PC-9 (cell line): ENCODE measurements at regions of chr1 and their contacts with region 1.

Region 1: DNA sequence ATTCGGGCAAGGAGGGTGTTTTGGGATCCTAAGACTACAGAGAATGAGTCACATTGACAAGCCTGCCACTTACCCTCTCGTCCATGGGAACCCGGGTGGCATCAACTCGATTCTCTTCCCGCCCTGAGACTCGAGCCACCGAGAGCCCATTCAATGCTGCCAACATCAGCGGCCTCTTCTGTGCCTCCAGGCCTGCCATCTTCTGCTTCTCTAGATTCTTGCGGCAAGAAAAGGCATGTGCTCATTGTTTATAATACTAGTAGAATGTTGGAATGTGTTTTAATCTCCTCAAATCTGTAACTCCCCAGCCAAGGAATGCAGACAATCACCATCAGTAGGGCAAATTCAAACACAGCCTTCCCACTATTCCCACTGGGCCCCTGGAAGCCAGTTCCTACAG is 96.9 kb downstream of the SMYD2 start:
- DNase-seq: peak in 1 of 2 experiments; percentile 83
- H3K4me3 ChIP-seq: no peak overlapping the region
- H3K27ac ChIP-seq: no peak overlapping the region
- H3K4me1 ChIP-seq: peaks cover 26% of the 10 kb centered on the region
- H3K27me3 ChIP-seq: no peaks in the 10 kb centered on the region
- CTCF ChIP-seq: no peak

Region 2: DNA sequence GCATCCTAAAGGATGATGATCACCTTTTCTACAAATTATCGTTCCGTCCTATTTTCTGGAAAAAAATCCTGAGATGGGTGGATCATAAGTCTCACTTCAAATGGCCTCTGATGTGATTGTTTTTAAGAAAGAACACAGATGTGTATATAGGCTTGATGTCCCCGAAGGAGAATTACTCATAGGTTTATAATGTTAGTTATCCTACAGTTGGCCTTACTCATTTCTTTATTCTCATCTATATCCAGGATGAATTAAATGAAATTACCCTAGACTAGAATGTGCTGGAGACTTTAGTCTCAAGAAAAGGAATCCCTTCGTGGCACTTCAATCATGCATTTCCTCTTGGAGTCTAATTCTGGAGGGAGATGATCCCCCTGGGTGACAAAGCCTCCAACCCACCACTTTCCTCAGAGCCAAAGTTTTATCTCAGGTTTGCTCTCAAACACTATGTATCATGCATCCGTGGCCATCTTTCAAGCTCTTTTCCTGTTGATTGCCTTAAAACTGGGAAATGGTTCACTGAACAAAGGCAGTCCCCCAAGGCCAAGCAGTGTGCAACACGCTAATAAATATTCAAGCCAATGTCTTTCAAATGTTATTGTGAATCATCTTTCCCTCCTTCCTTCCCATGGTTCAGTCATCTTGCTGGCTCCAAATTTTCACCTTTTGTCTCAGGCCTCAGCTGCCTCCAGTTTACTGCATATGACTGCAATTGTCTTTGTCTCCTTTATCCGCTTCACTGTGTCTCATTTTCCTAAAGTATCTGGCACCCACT is 129.4 kb before region 1 on chr1:
- CTCF ChIA-PET with region 1: no interaction called
- POLR2A ChIA-PET with region 1: no interaction called
- intact Hi-C with region 1: no loop called
- DNase-seq: no peak
- H3K4me3 ChIP-seq: no peak overlapping the region
- H3K27ac ChIP-seq: no peak overlapping the region
- H3K4me1 ChIP-seq: no peaks in the 10 kb centered on the region
- H3K27me3 ChIP-seq: no peaks in the 10 kb centered on the region
- CTCF ChIP-seq: no peak

Region 3: GRCh38 chr1:214331827-214332423 is 46.0 kb before region 1 on chr1:
- CTCF ChIA-PET with region 1: no interaction called
- POLR2A ChIA-PET with region 1: no interaction called
- intact Hi-C with region 1: no loop called
- DNase-seq: peak in 1 of 2 experiments; percentile 38
- H3K4me3 ChIP-seq: no peak overlapping the region
- H3K27ac ChIP-seq: no peak overlapping the region
- H3K4me1 ChIP-seq: peaks cover 8% of the 10 kb centered on the region; the same call in 1 of the 2 replicates
- H3K27me3 ChIP-seq: no peaks in the 10 kb centered on the region
- CTCF ChIP-seq: peak; percentile 88

Region 4: GRCh38 chr1:214349781-214350180 is 28.1 kb before region 1 on chr1:
- CTCF ChIA-PET with region 1: no interaction called
- POLR2A ChIA-PET with region 1: interaction called, 4 read pairs
- intact Hi-C with region 1: loop called (anchors 2 kb)
- DNase-seq: peak in 1 of 2 experiments; percentile 59
- H3K4me3 ChIP-seq: no peak overlapping the region
- H3K27ac ChIP-seq: no peak overlapping the region
- H3K4me1 ChIP-seq: no peaks in the 10 kb centered on the region
- H3K27me3 ChIP-seq: no peaks in the 10 kb centered on the region
- CTCF ChIP-seq: no peak

Region 5: DNA sequence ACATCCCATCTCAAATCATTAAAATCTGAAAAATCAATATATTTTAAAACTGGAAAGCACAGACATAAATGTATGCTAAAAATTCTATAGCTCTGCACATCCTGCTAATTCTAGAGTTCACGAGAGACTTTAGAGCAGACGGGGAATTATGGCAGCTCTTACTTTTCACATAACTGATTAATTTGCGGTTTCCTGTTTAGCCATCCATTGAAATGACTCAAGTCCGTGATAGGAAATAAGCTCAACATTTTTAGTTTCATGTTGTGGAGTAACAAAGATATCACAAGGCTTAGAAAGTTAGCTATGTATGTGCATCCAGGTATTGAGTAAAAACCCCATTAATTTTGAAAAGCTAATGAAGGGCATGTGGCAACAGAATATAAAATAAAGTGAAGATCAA is 26.3 kb after region 1 on chr1:
- CTCF ChIA-PET with region 1: no interaction called
- POLR2A ChIA-PET with region 1: no interaction called
- intact Hi-C with region 1: no loop called
- DNase-seq: no peak
- H3K4me3 ChIP-seq: no peak overlapping the region
- H3K27ac ChIP-seq: no peak overlapping the region
- H3K4me1 ChIP-seq: no peaks in the 10 kb centered on the region
- H3K27me3 ChIP-seq: no peaks in the 10 kb centered on the region
- CTCF ChIP-seq: no peak

Region 6: GRCh38 chr1:214454619-214455396 is 76.9 kb after region 1 on chr1:
- CTCF ChIA-PET with region 1: no interaction called
- POLR2A ChIA-PET with region 1: interaction called, 10 read pairs
- intact Hi-C with region 1: no loop called
- DNase-seq: peak; percentile 29 to 77
- H3K4me3 ChIP-seq: no peak overlapping the region
- H3K27ac ChIP-seq: peak overlapping the region; percentile 63
- H3K4me1 ChIP-seq: peaks cover 45% of the 10 kb centered on the region
- H3K27me3 ChIP-seq: no peaks in the 10 kb centered on the region
- CTCF ChIP-seq: no peak

Region 7: GRCh38 chr1:214494706-214495105 is 116.8 kb after region 1 on chr1:
- CTCF ChIA-PET with region 1: no interaction called
- POLR2A ChIA-PET with region 1: interaction called, 20 read pairs
- intact Hi-C with region 1: no loop called
- DNase-seq: peak; percentile 41 to 99
- H3K4me3 ChIP-seq: no peak overlapping the region
- H3K27ac ChIP-seq: peak overlapping the region; percentile 32
- H3K4me1 ChIP-seq: peaks cover 43% of the 10 kb centered on the region
- H3K27me3 ChIP-seq: no peaks in the 10 kb centered on the region
- CTCF ChIP-seq: no peak

Region 8: DNA sequence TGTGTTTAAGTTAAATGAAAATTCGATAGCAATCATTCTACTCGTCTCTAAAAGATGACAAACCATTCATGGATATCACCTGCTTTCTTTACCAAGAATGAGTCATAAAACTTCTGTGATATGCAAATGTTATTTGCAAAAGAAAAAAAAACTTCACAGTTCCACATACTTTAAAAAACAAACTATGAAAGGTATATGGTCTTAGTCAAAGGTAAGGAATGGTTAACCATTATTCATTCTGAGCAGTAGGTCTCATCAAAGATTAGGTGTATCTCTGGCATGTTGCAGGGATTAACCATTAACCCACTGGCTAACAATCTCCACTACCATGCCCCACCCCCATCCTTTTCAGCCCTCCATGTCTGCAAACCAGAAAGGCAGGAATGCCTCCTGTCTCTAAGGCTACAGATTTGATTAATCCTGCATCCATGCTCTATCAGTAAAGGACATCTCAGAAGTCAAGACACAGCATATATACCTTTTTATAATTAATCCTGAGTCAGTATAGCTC is 129.1 kb after region 1 on chr1:
- CTCF ChIA-PET with region 1: no interaction called
- POLR2A ChIA-PET with region 1: no interaction called
- intact Hi-C with region 1: loop called (anchors 2 kb)
- DNase-seq: peak; percentile 75 to 97
- H3K4me3 ChIP-seq: peak overlapping the region; percentile 6; the same call in 1 of the 2 replicates
- H3K27ac ChIP-seq: peak overlapping the region; percentile 13; the same call in 1 of the 2 replicates
- H3K4me1 ChIP-seq: peaks cover 47% of the 10 kb centered on the region
- H3K27me3 ChIP-seq: no peaks in the 10 kb centered on the region
- CTCF ChIP-seq: no peak

Region 9: DNA sequence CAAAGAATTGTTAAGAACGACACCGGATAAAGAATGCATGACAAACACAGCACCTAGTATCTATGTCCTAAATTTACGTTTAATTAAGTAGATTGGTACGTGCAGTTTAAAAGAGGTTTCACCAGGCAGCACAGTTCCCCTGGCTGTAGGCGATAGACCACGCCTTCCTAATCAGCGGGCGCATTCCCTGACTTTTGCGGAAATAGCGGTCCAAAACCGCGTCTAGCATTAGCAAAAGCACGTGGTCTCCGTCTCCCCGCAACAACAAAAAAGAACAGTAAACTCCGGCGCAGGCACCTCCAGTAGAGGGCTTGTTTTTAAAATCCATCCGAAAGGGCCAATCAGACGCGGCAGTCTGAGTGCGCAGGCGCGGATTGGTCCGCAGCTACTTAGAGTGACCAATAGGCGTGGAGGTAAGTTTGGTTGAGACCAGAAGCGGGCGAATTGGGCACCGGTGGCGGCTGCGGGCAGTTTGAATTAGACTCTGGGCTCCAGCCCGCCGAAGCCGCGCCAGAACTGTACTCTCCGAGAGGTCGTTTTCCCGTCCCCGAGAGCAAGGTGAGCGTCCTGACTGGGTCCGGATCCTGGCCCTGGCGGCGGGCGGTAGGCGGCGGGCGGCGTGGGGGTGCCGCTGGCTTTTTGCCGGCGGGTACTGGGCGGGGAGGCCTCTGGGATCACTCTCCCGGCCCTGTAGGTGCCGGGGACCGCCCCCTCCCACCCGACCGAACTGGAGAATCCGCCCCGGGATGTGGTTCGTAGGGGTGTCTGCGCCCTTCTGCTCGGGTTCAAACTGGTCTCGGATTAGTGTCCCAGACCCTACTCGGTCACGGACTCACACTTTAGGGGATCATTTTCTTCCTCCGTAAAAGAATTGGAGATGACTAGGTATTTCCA is 225.1 kb after region 1 on chr1 and contains the start of gene CENPF:
- CTCF ChIA-PET with region 1: no interaction called
- POLR2A ChIA-PET with region 1: no interaction called
- intact Hi-C with region 1: loop called (anchors 2 kb)
- DNase-seq: peak; percentile 96 to 97
- H3K4me3 ChIP-seq: peak within 1 kb of the TSS; percentile 74
- H3K27ac ChIP-seq: no peak within 1 kb of the TSS
- H3K4me1 ChIP-seq: peaks cover 12% of the 10 kb centered on the region
- H3K27me3 ChIP-seq: no peaks in the 10 kb centered on the region
- CTCF ChIP-seq: no peak
- total RNA-seq, gene CENPF: 102 and 156 TPM in 2 replicates